CD4-positive, alpha-beta T cell (primary cell): ENCODE measurements at regions of chr5 and their contacts with region 1.

Region 1: GRCh38 chr5:138542956-138543729 is at the start of gene ETF1:
- DNase-seq: peak; percentile 98 to 100 (median 99)
- ATAC-seq: peak; percentile 87
- H3K4me3 ChIP-seq: peak within 1 kb of the TSS; percentile 95
- H3K4me3 Mint-ChIP-seq: peak within 1 kb of the TSS; percentile 99
- H3K27ac ChIP-seq: peak within 1 kb of the TSS; percentile 99 to 100
- H3K27ac Mint-ChIP-seq: peak within 1 kb of the TSS; percentile 99
- H3K4me1 ChIP-seq: peaks cover 57% of the 10 kb centered on the region
- H3K4me1 Mint-ChIP-seq: peaks cover 88% of the 10 kb centered on the region
- H3K27me3 ChIP-seq: no peaks in the 10 kb centered on the region
- H3K27me3 Mint-ChIP-seq: no peaks in the 10 kb centered on the region
- CTCF ChIP-seq: no peak
- total RNA-seq, gene ETF1: 178 to 187 TPM

Region 2: DNA sequence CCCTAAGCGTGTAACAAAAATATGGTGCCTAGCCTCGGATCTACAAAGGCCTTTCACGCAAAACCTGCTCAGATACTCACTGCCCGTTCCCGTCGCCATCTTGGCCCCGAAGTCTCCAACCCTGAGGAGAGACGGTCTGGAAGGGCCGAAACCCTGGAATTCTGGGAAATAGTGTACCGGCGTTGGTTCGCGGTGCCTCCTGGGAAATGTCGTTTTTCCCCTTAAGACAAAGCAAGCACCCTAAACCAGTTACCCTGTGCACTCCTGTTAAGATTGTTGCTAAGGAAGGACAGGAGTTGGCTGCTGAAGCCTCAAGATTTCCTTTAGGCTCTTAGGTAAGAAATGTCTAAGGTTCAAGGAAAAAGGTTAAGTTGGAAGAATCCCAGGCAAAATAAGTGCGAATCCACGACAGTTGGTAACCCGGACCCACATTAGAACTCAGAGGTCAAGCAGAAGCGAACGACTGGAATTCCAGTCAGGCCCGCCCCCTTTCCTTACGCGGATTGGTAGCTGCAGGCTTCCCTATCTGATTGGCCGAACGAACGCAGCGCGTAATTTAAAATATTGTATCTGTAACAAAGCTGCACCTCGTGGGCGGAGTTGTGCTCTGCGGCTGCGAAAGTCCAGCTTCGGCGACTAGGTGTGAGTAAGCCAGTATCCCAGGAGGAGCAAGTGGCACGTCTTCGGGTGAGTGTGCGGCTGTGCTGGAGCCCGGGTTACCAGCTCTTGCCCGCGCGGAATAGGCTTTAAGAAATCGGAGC is 364.4 kb before region 1 on chr5 and contains the starts of genes BRD8 and KIF20A:
- CTCF ChIA-PET with region 1: no interaction called
- POLR2A ChIA-PET with region 1: interaction called, 6 read pairs
- intact Hi-C with region 1: loop called in 1 of 2 experiments (anchors 10 kb)
- DNase-seq: peak; percentile 77 to 94 (median 85)
- ATAC-seq: peak; percentile 86
- H3K4me3 ChIP-seq: peak within 1 kb of the TSS; percentile 94
- H3K4me3 Mint-ChIP-seq: no peak within 1 kb of the TSS
- H3K27ac ChIP-seq: peak within 1 kb of the TSS; percentile 55 to 76
- H3K27ac Mint-ChIP-seq: no peak within 1 kb of the TSS
- H3K4me1 ChIP-seq: peaks cover 27% of the 10 kb centered on the region
- H3K4me1 Mint-ChIP-seq: peaks cover 11% of the 10 kb centered on the region
- H3K27me3 ChIP-seq: no peaks in the 10 kb centered on the region
- H3K27me3 Mint-ChIP-seq: no peaks in the 10 kb centered on the region
- CTCF ChIP-seq: no peak
- total RNA-seq, gene BRD8: 6.9 to 9.6 TPM
- total RNA-seq, gene KIF20A: not detected

Region 3: DNA sequence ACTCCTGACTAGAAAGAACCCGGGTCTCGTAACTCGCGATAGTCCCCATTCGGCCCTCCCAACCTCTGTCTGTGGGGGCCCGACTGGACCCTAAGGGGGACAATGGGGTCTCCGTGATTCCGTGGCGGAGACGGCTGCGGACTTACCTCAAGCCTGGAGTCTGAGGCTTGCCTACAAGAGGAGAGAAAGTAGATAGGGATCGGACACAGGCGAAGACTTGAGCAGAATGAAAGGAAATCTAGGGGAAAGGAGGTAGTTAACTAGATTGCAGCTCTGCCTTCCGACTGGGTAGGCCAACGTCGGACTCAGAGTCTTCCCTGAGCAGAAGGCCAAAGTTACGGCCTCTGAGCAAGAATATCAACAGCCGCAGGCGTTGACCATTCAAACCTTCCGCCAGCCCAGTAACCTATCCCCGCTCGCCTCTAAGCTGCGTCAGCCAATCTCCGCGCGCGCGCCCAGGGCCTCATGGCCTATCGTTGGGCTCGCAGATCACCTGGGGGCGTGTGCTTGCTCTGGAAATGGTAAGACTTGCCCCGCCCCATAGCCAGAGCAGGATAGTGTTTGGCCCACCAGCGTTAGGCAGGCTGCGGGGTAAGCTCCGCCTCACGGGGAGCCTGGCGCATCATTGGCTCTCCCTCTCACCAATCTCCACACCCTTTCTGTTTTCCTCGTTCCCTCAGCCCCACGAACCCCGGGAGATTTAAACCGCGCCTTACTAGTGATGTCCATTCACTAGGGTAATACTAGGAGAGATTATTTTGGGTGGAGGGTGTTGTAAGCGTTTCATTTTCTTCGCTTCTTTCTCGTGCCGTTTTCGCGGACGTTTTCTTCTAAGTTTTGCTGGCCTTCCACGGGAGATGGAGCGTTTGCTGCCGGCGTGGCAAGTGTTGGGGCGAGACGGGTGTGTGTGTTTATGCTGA is 211.4 kb before region 1 on chr5 and contains the start of gene CDC25C:
- CTCF ChIA-PET with region 1: interaction called, 3 read pairs
- POLR2A ChIA-PET with region 1: interaction called, 20 read pairs
- intact Hi-C with region 1: loop called in 1 of 2 experiments (anchors 2 kb)
- DNase-seq: peak; percentile 92 to 99 (median 95)
- ATAC-seq: peak; percentile 99
- H3K4me3 ChIP-seq: peak within 1 kb of the TSS; percentile 68
- H3K4me3 Mint-ChIP-seq: peak within 1 kb of the TSS; percentile 83
- H3K27ac ChIP-seq: no peak within 1 kb of the TSS
- H3K27ac Mint-ChIP-seq: peak within 1 kb of the TSS; percentile 40
- H3K4me1 ChIP-seq: peaks cover 13% of the 10 kb centered on the region
- H3K4me1 Mint-ChIP-seq: peaks cover 8% of the 10 kb centered on the region
- H3K27me3 ChIP-seq: no peaks in the 10 kb centered on the region
- H3K27me3 Mint-ChIP-seq: no peaks in the 10 kb centered on the region
- CTCF ChIP-seq: no peak
- total RNA-seq, gene CDC25C: not detected

Region 4: DNA sequence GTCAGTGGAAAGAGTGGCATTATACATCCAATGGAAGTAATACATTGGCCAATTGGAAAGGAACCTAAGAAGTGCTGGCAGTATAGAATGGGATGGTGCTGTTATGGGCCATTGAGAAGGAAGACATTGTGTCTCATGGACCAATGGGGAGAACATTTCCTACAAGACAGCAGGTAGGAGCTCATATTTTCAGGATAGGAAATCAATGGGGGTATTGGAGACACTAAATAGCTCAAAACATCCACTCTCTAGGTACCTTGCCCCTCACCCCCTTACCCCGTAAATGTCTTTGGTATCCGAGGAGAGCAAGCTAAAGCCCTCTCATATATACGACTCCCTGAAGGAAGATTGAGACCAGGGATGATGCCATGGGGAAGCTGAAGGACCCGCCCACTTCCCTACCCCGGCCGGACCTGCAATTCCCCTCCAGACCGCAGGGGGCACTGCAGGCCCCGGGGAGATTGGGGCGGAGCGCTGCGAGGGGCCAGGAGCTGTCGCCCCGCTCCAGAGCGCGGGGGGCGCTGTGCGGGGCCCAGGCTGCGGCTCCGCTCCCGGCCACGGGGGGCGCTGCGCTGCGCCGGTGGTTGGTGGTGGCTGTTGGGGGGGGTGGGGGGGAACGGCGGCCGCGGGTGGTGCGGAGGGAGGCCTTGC is 190.9 kb before region 1 on chr5 and contains the start of gene KDM3B:
- CTCF ChIA-PET with region 1: interaction called, 15 read pairs
- POLR2A ChIA-PET with region 1: interaction called, 38 read pairs
- intact Hi-C with region 1: loop called (anchors 5 kb)
- DNase-seq: peak; percentile 82 to 97 (median 91)
- ATAC-seq: peak; percentile 83
- H3K4me3 ChIP-seq: peak within 1 kb of the TSS; percentile 99
- H3K4me3 Mint-ChIP-seq: peak within 1 kb of the TSS; percentile 95
- H3K27ac ChIP-seq: peak within 1 kb of the TSS; percentile 84 to 89
- H3K27ac Mint-ChIP-seq: peak within 1 kb of the TSS; percentile 94
- H3K4me1 ChIP-seq: peaks cover 24% of the 10 kb centered on the region
- H3K4me1 Mint-ChIP-seq: peaks cover 42% of the 10 kb centered on the region
- H3K27me3 ChIP-seq: no peaks in the 10 kb centered on the region
- H3K27me3 Mint-ChIP-seq: no peaks in the 10 kb centered on the region
- CTCF ChIP-seq: peak; percentile 90
- total RNA-seq, gene KDM3B: 59.5 to 66.0 TPM

Region 5: GRCh38 chr5:138491669-138492559 is 51.2 kb before region 1 on chr5:
- CTCF ChIA-PET with region 1: no interaction called
- POLR2A ChIA-PET with region 1: no interaction called
- intact Hi-C with region 1: loop called (anchors 2 to 10 kb)
- DNase-seq: peak; percentile 73 to 94 (median 82)
- ATAC-seq: peak; percentile 99
- H3K4me3 ChIP-seq: peak overlapping the region; percentile 60
- H3K4me3 Mint-ChIP-seq: peak overlapping the region; percentile 90
- H3K27ac ChIP-seq: no peak overlapping the region
- H3K27ac Mint-ChIP-seq: peak overlapping the region; percentile 3
- H3K4me1 ChIP-seq: peaks cover 24% of the 10 kb centered on the region
- H3K4me1 Mint-ChIP-seq: peaks cover 15% of the 10 kb centered on the region
- H3K27me3 ChIP-seq: peaks cover 0 to 17% of the 10 kb centered on the region in 2 experiments
- H3K27me3 Mint-ChIP-seq: peaks cover 18% of the 10 kb centered on the region
- CTCF ChIP-seq: no peak

Region 6: GRCh38 chr5:138568061-138568824 is 25.1 kb after region 1 on chr5:
- CTCF ChIA-PET with region 1: interaction called, 10 read pairs
- POLR2A ChIA-PET with region 1: interaction called, 152 read pairs
- intact Hi-C with region 1: no loop called
- DNase-seq: peak in 1 of 14 experiments; percentile 20
- ATAC-seq: no peak
- H3K4me3 ChIP-seq: no peak overlapping the region
- H3K4me3 Mint-ChIP-seq: no peak overlapping the region
- H3K27ac ChIP-seq: no peak overlapping the region
- H3K27ac Mint-ChIP-seq: peak overlapping the region; percentile 29
- H3K4me1 ChIP-seq: peaks cover 34% of the 10 kb centered on the region
- H3K4me1 Mint-ChIP-seq: peaks cover 73% of the 10 kb centered on the region
- H3K27me3 ChIP-seq: no peaks in the 10 kb centered on the region
- H3K27me3 Mint-ChIP-seq: no peaks in the 10 kb centered on the region
- CTCF ChIP-seq: no peak

Region 7: GRCh38 chr5:138725138-138725833 is 182.1 kb after region 1 on chr5:
- CTCF ChIA-PET with region 1: no interaction called
- POLR2A ChIA-PET with region 1: no interaction called
- intact Hi-C with region 1: no loop called
- DNase-seq: no peak
- ATAC-seq: no peak
- H3K4me3 ChIP-seq: no peak overlapping the region
- H3K4me3 Mint-ChIP-seq: no peak overlapping the region
- H3K27ac ChIP-seq: no peak overlapping the region
- H3K27ac Mint-ChIP-seq: no peak overlapping the region
- H3K4me1 ChIP-seq: peaks cover 4% of the 10 kb centered on the region
- H3K4me1 Mint-ChIP-seq: peaks cover 6% of the 10 kb centered on the region
- H3K27me3 ChIP-seq: peaks cover 4 to 19% of the 10 kb centered on the region in 2 experiments
- H3K27me3 Mint-ChIP-seq: peaks cover 57% of the 10 kb centered on the region
- CTCF ChIP-seq: no peak

Region 8: GRCh38 chr5:139293504-139294373 is 750.6 kb after region 1 on chr5 and contains the start of gene MATR3:
- CTCF ChIA-PET with region 1: no interaction called
- POLR2A ChIA-PET with region 1: interaction called, 29 read pairs
- intact Hi-C with region 1: no loop called
- DNase-seq: peak; percentile 88 to 96 (median 92)
- ATAC-seq: peak; percentile 89
- H3K4me3 ChIP-seq: peak within 1 kb of the TSS; percentile 95
- H3K4me3 Mint-ChIP-seq: peak within 1 kb of the TSS; percentile 99
- H3K27ac ChIP-seq: peak within 1 kb of the TSS; percentile 98 to 100
- H3K27ac Mint-ChIP-seq: peak within 1 kb of the TSS; percentile 99
- H3K4me1 ChIP-seq: peaks cover 27% of the 10 kb centered on the region
- H3K4me1 Mint-ChIP-seq: peaks cover 52% of the 10 kb centered on the region
- H3K27me3 ChIP-seq: no peaks in the 10 kb centered on the region
- H3K27me3 Mint-ChIP-seq: no peaks in the 10 kb centered on the region
- CTCF ChIP-seq: no peak
- total RNA-seq, gene MATR3: 376 to 401 TPM